ENCODE measurements at regions of chr5 and their contacts with region 1.

Region 1: DNA sequence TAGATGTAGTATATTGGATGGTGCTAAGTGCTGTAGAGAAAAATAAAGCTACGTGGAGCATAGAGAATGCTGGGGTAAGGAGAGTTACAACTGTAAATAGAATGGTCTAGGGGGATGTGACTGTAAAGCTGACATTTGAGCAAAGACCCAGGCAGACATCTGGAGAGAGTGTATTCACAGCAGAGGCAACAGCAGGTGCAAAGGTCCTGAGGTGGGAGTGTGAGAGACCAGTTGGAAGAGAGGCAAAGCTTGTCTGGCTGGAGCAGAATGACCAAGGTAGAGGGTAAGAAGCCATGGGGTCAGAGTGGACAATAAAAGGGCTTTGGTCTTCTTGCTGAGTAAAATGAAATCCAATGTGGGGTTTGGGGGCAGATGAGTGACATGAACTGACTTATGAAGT is 92.9 kb upstream of the IQGAP2 start:
- DNase-seq: no peak

Region 2: GRCh38 chr5:76325876-76326491 is 15.8 kb after region 1 on chr5:
- CTCF ChIA-PET with region 1: interaction called, 11 read pairs
- POLR2A ChIA-PET with region 1: no interaction called
- DNase-seq: no peak

Measured in HEK293T (cell line).